Dorsolateral prefrontal cortex (tissue), 120 donors: ENCODE measurements at regions of chr2 and their contacts with region 1.

Region 1: DNA sequence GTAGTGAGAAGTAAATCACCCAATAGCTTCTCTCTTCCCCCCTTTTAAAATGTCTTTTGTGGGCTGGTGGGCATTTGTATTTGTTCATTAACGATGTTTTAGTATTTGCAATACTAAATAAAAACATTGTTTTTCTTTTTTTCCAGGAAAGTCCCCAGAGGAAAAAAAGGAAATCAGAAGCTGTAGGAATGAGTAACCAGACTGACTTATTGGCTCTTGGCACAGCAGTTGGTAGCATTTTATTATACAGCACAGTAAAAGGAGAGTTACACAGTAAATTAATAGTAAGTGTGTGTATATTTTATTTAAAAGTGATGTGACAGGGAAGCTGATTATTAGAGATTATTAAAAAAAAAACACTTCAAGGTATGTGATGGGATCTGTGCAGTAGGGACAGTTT is 7.4 kb downstream of the WDR43 start:
- DNase-seq: no peak
- H3K4me3 ChIP-seq: no peak overlapping the region
- H3K27ac ChIP-seq: no peak overlapping the region
- H3K27me3 ChIP-seq: no peaks in the 10 kb centered on the region
- CTCF ChIP-seq: no peak

Region 2: GRCh38 chr2:28927878-28928277 is 26.0 kb after region 1 on chr2:
- intact Hi-C with region 1: no loop called
- DNase-seq: no peak
- H3K4me3 ChIP-seq: no peak overlapping the region
- H3K27ac ChIP-seq: no peak overlapping the region
- H3K27me3 ChIP-seq: no peaks in the 10 kb centered on the region
- CTCF ChIP-seq: no peak

Region 3: DNA sequence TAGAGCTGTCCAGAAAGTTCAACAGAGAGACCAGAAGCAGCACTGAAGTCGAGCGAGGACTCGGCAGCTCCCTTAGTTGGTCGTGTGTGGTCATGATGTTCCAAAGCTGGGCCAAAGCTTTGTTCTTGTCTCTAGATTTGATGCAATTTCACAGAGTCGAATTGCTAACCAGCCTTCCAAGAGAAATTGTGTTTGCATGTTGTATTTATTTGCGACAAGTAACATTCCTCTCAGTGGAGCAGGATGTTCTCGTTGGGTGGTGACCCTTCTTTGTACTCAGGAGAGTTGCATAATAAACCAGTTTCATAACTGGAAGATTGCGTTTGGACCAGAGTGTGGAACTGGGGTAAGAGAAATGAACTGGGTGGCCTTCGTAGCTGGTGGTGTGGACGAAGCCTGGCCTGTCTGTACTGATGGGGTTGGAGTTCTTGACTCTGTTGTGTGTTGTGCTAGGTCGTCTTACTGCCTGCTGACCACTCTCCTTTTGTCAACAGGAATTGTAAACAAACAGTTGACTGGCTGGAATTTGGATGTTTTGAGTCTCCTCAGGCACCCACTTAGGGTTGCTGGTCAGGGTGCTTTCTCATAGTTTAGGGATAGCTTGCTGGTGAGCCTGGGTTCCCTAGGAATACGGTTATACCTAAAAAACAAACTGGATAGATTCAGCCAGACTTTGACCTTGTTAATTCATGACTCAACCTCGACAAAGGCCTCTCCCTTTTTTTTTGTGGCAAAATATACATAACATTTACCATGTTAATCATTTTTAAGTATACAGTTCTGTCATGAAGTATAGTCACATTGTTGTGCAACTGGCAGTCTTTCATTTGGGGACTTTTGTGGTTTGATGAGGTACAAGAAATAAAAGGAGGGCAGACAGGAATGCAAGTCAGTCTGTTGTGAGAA is 50.3 kb after region 1 on chr2:
- intact Hi-C with region 1: loop called in 1 of 2 experiments (anchors 2 kb)
- DNase-seq: no peak
- H3K4me3 ChIP-seq: no peak overlapping the region
- H3K27ac ChIP-seq: peak overlapping the region in 24 of 59 donors; percentile 0 to 71 (median 20)
- H3K27me3 ChIP-seq: no peaks in the 10 kb centered on the region
- CTCF ChIP-seq: no peak